Pancreas (tissue), 10 donors: ENCODE measurements at regions of chr4 and their contacts with region 1.

Region 1: GRCh38 chr4:145481164-145481941 is at the start of gene SMAD1:
- DNase-seq: peak; percentile 86 to 96 (median 92)
- ATAC-seq: peak; percentile 88 to 95 (median 94)
- H3K4me3 ChIP-seq: peak within 1 kb of the TSS; percentile 72 to 98 (median 87)
- H3K27ac ChIP-seq: peak within 1 kb of the TSS; percentile 97 to 99 (median 98)
- H3K4me1 ChIP-seq: peaks cover 9 to 26% (median 21%) of the 10 kb centered on the region in 3 donors
- H3K27me3 ChIP-seq: no peaks in the 10 kb centered on the region
- CTCF ChIP-seq: no peak
- total RNA-seq, gene SMAD1: 11.4 to 19.3 (median 16.6) TPM

Region 2: GRCh38 chr4:145545538-145546174 is 64.3 kb after region 1 on chr4:
- intact Hi-C with region 1: loop called in 1 of 3 experiments (anchors 10 kb)
- DNase-seq: peak in 3 of 6 donors; percentile 72 to 77 (median 76)
- ATAC-seq: peak; percentile 91 to 94 (median 92)
- H3K4me3 ChIP-seq: no peak overlapping the region
- H3K27ac ChIP-seq: peak overlapping the region; percentile 4 to 74 (median 36)
- H3K4me1 ChIP-seq: peaks cover 17 to 42% (median 30%) of the 10 kb centered on the region in 3 donors
- H3K27me3 ChIP-seq: no peaks in the 10 kb centered on the region
- CTCF ChIP-seq: no peak